Activated B cell treated with CpG ODN at 0.5 μM for 24 hours (primary cell): ENCODE measurements at regions of chr6 and their contacts with region 1.

Region 1: GRCh38 chr6:33014841-33015634 is 5.6 kb upstream of the HLA-DOA start:
- DNase-seq: no peak
- ATAC-seq: peak; percentile 34
- H3K4me3 Mint-ChIP-seq: peak overlapping the region; percentile 71
- H3K27ac Mint-ChIP-seq: peak overlapping the region; percentile 98
- H3K4me1 Mint-ChIP-seq: peaks cover 69% of the 10 kb centered on the region
- H3K27me3 Mint-ChIP-seq: no peaks in the 10 kb centered on the region
- CTCF ChIP-seq: no peak

Region 2: DNA sequence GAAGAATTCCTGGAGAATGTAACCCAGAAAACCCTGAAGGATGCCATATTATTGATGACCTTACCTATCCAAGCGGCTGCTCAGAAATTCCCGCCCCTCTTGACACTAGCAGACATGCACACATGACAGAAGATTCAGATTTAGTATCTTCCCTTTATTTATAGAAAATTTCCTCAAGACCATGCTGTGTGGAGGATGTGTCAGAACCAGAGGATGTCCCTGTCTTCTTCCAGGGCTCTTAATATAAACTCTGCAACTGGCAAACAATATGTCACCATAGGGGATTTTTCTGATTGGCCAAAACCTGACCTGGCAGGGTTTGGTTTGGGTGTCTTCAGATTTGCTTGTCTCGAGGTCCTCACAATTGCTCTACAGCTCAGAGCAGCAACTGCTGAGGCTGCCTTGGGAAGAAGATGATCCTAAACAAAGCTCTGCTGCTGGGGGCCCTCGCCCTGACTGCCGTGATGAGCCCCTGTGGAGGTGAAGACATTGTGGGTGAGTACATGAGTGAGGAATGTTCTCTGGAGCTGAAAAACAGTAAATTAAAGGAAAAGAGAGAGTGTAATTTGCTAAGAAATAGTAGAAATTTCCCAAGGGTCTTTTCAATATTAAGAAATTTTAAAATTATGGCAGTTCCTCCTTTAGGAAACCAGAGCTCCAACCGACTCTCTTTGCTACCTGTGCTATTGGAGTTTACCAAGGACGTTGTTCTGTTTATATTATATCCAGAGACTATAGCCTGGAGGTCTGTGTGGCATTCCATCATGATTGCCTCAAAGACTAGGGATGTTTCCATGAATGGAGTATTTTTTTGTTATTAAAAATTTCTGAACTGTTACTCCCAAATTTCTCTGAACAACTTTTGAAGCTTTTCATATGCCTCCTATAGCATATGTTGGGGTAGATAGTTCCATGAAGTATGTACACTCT is 273.7 kb before region 1 on chr6 and contains the start of gene HLA-DQA2:
- CTCF ChIA-PET with region 1: no interaction called
- POLR2A ChIA-PET with region 1: no interaction called
- intact Hi-C with region 1: no loop called
- DNase-seq: peak; percentile 41
- ATAC-seq: peak; percentile 99
- H3K4me3 Mint-ChIP-seq: peak within 1 kb of the TSS; percentile 81
- H3K27ac Mint-ChIP-seq: peak within 1 kb of the TSS; percentile 83
- H3K4me1 Mint-ChIP-seq: peaks cover 6% of the 10 kb centered on the region
- H3K27me3 Mint-ChIP-seq: peaks cover 19% of the 10 kb centered on the region
- CTCF ChIP-seq: no peak
- total RNA-seq, gene HLA-DQA2: 231 and 237 TPM in 2 replicates

Region 3: DNA sequence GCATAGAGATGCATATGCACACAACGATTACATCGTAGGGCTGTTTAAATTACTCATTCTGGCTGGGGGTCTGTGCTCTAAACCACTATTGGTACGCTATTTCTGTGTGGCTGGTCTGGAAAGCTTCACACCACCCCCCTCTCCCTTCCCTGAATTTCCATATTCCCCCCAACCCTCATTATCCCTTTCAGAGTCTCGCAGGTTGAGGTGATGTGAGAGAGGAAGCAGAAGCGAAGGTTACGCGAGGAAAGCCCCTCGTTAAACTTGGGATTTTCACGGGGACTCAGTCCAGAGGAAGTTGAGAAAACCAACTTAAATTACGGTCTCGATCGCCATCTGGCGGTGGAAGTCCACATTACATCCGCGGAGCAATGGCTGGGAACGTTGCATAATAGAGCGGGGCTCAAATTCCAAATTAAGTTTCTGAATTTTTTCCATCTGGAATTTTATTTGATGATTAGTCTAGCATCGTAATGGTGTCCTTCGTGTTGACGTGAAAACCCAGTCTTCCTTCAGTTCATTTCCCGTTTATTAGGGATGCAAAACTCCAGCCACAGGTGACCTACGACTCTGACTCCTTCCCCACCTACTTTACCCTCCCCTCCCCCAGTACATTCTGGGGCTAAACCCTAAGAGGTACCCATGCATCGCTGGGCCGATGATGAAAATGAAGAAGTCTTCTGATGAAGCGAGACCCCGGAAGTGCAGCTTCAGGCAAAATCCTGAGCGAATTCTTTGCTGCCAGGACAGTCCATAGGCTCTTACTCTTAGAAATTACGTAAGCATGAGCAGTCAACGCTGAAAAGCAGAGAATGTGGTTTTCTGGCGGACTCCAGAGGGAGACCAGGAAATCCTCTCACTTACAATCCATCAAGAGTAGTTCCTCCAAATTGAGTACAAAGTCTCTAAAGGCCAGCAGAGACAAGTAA is 217.9 kb before region 1 on chr6:
- CTCF ChIA-PET with region 1: no interaction called
- POLR2A ChIA-PET with region 1: no interaction called
- intact Hi-C with region 1: no loop called
- DNase-seq: peak; percentile 82
- ATAC-seq: peak; percentile 87
- H3K4me3 Mint-ChIP-seq: peak overlapping the region; percentile 82
- H3K27ac Mint-ChIP-seq: peak overlapping the region; percentile 95
- H3K4me1 Mint-ChIP-seq: peaks cover 40% of the 10 kb centered on the region
- H3K27me3 Mint-ChIP-seq: no peaks in the 10 kb centered on the region
- CTCF ChIP-seq: peak; percentile 91

Region 4: GRCh38 chr6:33049323-33050013 is 34.4 kb after region 1 on chr6:
- CTCF ChIA-PET with region 1: interaction called, 10 read pairs
- POLR2A ChIA-PET with region 1: interaction called, 5 read pairs
- intact Hi-C with region 1: loop called (anchors 1 kb)
- DNase-seq: no peak
- ATAC-seq: no peak
- H3K4me3 Mint-ChIP-seq: no peak overlapping the region
- H3K27ac Mint-ChIP-seq: no peak overlapping the region
- H3K4me1 Mint-ChIP-seq: peaks cover 20% of the 10 kb centered on the region
- H3K27me3 Mint-ChIP-seq: no peaks in the 10 kb centered on the region
- CTCF ChIP-seq: no peak

Region 5: GRCh38 chr6:33061987-33062386 is 46.9 kb after region 1 on chr6:
- CTCF ChIA-PET with region 1: interaction called, 5 read pairs
- POLR2A ChIA-PET with region 1: interaction called, 2,264 read pairs
- intact Hi-C with region 1: no loop called
- DNase-seq: no peak
- ATAC-seq: peak; percentile 72
- H3K4me3 Mint-ChIP-seq: peak overlapping the region; percentile 64
- H3K27ac Mint-ChIP-seq: peak overlapping the region; percentile 94
- H3K4me1 Mint-ChIP-seq: peaks cover 52% of the 10 kb centered on the region
- H3K27me3 Mint-ChIP-seq: no peaks in the 10 kb centered on the region
- CTCF ChIP-seq: no peak

Region 6: GRCh38 chr6:33082702-33083101 is 67.7 kb after region 1 on chr6:
- CTCF ChIA-PET with region 1: interaction called, 240 read pairs
- POLR2A ChIA-PET with region 1: interaction called, 2,264 read pairs
- intact Hi-C with region 1: loop called (anchors 1 kb)
- DNase-seq: no peak
- ATAC-seq: peak; percentile 54
- H3K4me3 Mint-ChIP-seq: peak overlapping the region; percentile 89
- H3K27ac Mint-ChIP-seq: peak overlapping the region; percentile 78
- H3K4me1 Mint-ChIP-seq: peaks cover 74% of the 10 kb centered on the region
- H3K27me3 Mint-ChIP-seq: no peaks in the 10 kb centered on the region
- CTCF ChIP-seq: no peak

Region 7: DNA sequence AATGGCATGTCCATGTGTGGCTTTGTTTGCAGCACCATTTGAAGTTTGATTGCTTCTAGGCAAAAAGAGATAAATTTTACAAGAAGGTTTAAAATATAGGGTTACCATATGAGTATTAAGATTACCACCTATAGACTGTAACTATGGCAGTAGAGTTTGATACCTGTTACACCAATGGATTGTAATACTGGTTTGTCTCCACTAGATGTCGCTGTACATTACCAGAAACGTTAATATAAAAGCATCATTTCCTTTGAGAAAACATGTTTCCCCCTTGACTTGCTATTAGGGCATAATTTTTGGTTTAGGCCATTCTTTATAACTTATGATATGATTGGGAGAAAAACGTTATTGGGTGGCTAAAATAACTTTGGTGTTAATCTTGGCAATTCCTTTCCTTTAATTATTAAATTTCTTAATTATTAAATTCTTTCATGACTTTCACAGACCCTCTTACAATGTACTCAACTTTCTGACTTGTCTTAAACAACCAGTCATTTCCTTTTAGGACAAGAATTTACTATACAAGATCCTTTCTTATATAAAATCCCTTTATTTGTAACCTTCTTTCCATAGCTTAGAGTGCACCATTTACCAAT is 103.6 kb after region 1 on chr6:
- CTCF ChIA-PET with region 1: interaction called, 45 read pairs
- POLR2A ChIA-PET with region 1: interaction called, 3 read pairs
- intact Hi-C with region 1: loop called (anchors 2 kb)
- DNase-seq: no peak
- ATAC-seq: peak; percentile 48
- H3K4me3 Mint-ChIP-seq: no peak overlapping the region
- H3K27ac Mint-ChIP-seq: no peak overlapping the region
- H3K4me1 Mint-ChIP-seq: peaks cover 51% of the 10 kb centered on the region
- H3K27me3 Mint-ChIP-seq: peaks cover 9% of the 10 kb centered on the region
- CTCF ChIP-seq: peak; percentile 14

Region 8: DNA sequence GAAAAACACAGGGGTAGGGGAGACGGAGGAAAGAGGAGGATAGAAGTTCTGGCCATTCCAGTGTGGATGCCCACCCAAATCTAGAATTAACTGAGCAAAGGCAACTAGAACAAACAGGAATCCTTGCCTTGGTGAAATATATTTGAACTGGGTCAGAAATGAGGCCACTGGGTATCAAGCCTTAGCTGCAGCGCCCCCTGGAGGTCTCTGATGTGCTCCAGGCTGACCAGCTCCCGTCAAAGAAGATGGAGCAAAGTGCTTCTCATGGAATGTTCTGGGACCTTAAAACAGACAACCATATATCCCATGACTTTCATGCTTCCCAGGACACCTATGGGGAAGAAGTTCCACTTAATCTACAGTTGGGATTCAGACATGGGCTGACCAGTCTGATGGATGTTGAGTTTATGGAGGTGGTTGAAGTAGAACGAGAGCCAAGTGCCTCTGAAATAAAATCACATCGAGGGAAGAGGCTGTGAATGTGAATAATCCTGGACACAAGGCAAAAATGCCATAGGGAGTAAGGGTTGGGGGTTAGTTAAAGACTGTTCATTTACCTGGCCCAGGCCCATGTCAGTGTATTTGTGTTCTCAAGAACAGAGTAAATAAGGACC is 111.2 kb after region 1 on chr6:
- CTCF ChIA-PET with region 1: interaction called, 45 read pairs
- POLR2A ChIA-PET with region 1: interaction called, 15 read pairs
- intact Hi-C with region 1: loop called (anchors 1 kb)
- DNase-seq: peak; percentile 59
- ATAC-seq: peak; percentile 73
- H3K4me3 Mint-ChIP-seq: no peak overlapping the region
- H3K27ac Mint-ChIP-seq: no peak overlapping the region
- H3K4me1 Mint-ChIP-seq: peaks cover 4% of the 10 kb centered on the region
- H3K27me3 Mint-ChIP-seq: no peaks in the 10 kb centered on the region
- CTCF ChIP-seq: no peak